A673 (cell line): ENCODE measurements at regions of chr22 and their contacts with region 1.

Region 1: DNA sequence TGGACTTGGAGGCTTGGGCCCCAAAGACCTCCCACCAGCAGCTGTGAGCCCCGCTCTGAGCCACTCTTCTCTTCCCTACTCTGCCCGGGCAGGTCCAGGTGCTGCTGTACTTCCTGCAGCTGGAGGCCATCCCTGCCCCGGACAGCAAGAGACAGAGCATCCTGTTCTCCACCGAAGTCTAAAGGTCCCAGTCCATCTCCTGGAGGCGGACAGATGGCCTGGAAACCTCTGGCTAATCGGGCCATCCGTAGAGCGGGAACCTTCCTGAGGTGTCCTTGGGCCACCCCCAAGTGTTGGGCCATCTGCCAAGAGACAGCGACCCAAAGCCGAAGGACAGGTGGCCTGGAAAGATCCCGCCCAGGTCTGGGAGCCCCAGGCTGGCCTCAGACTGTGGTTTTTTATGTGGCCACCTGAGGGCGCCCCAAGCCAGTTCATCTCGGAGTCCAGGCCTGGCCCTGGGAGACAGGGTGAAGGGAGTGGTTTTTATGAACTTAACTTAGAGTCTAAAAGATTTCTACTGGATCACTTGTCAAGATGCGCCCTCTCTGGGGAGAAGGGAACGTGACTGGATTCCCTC is 135.1 kb downstream of the BCR start:
- DNase-seq: peak; percentile 73
- H3K4me3 ChIP-seq: no peak overlapping the region
- H3K27ac ChIP-seq: no peak overlapping the region
- H3K4me1 ChIP-seq: no peaks in the 10 kb centered on the region
- H3K27me3 ChIP-seq: no peaks in the 10 kb centered on the region
- CTCF ChIP-seq: peak; percentile 62

Region 2: DNA sequence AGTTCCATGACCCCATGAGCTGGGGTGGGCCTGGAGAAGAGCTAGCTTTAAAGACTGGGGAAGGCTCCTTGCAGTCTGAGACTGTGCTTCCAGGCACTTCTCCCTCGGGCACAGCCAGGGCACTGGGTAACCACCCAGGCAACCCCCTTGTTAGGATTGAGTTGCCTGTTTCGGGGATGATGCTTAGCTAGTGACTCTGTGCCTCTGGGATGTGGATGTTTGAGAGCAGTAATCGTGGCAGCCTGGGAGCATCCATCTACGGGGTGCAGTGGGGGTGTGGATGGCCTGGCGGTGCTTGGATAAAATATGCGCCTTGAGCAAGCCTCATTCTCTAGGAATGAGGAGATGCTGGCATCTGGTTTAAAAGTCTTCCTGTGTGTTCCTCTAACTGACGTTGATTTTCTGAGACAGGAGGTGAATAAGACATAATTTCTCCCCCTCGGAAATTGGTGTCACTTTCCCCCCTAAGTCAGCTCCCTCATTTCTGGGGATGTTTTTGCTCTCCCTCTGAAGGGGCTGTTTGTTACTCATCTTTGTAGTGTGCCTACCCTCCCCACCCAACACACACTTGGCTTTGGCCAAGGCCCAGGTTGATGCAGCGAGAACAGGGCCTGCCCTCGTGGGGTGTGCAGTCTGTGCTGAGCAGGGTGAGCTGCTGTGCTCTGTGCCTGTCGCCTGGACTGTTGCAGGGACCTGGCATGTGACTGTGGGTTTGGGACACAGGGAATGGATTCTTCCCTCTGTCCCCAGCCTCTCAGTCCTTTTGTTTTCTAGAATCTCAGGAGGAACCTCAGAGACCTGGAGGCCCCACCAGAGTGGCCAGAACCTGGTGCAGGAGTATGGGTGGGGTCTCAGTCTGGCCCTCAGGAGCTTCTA is 243.2 kb before region 1 on chr22:
- CTCF ChIA-PET with region 1: no interaction called
- POLR2A ChIA-PET with region 1: no interaction called
- intact Hi-C with region 1: no loop called
- DNase-seq: no peak
- H3K4me3 ChIP-seq: no peak overlapping the region
- H3K27ac ChIP-seq: no peak overlapping the region
- H3K4me1 ChIP-seq: peaks cover 6% of the 10 kb centered on the region
- H3K27me3 ChIP-seq: no peaks in the 10 kb centered on the region
- CTCF ChIP-seq: no peak

Region 3: DNA sequence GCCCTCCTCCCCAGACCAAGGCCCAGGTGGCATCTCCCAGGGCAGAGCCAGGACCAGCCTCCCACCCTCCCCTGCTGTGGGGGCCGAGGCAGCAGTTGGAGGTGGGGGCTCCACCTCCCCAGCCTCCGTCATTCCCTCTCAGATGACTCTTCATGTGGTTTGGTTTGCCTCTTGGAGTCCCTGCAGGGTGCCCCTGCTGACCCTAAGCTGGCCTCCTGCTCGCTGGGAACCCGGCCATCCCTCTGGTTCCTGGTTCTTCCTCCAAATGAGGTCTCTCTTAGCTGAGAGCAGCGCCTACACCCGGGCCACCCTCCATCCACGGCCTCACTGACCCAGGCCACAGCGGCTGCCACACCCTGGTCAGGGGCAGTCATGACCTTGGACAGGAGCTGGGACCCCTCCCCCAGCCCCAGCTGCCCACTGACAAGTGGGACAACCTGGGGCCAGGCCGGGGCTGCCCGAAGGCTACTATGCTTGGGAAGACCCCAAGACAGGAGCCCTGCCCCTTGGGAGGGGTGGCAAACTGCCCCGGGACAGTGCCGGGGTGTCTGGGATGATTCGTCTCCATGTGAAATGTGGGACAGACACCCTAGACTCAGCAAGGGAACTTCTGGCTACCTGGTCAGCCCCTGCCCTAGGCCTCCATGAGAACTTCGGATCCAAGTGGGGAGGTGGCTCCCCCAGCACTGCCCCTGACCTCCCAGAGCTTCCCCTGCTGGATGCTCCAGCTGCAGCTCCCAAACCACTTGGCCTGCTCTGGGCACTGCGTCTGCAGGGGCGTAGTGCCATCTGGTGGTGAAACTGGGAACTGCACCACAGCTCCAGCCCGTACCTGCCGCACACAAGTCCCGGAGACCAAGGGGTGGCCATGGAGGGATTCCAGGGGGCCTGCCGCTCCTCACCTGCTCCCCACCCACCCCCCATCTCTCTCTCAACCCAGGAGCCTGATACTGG is 70.1 kb after region 1 on chr22:
- CTCF ChIA-PET with region 1: no interaction called
- POLR2A ChIA-PET with region 1: no interaction called
- intact Hi-C with region 1: loop called (anchors 5 kb)
- DNase-seq: peak; percentile 81
- H3K4me3 ChIP-seq: no peak overlapping the region
- H3K27ac ChIP-seq: no peak overlapping the region
- H3K4me1 ChIP-seq: no peaks in the 10 kb centered on the region
- H3K27me3 ChIP-seq: no peaks in the 10 kb centered on the region
- CTCF ChIP-seq: peak; percentile 97